ENCODE measurements at regions of chr5 and their contacts with region 1.

Region 1: GRCh38 chr5:84045964-84046363 is 325.3 kb upstream of the HAPLN1 start:
- DNase-seq: no peak
- ATAC-seq: no peak
- H3K4me3 ChIP-seq: no peak overlapping the region
- H3K27ac ChIP-seq: no peak overlapping the region
- H3K4me1 ChIP-seq: no peaks in the 10 kb centered on the region
- H3K27me3 ChIP-seq: no peaks in the 10 kb centered on the region
- CTCF ChIP-seq: no peak
- POLR2A ChIP-seq: no peak

Region 2: DNA sequence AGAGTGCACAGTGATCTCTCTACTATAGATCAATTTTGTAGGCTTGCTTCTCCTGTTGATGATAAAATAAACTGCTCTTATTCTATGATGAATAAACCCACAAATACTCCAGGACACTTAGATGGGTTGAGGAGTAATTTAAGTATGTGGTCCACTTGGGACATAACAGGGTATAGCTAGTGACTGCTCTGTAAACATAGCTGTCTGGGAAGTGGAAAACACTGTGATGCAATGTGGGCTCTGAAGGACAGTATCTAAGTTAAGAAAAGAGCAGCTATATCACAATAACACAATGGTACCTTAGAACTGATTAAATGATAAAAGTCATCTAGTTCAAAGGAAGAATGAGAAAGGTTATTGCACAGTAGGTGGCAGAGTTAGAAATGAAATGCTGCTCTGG is 31.0 kb before region 1 on chr5:
- intact Hi-C with region 1: no loop called
- DNase-seq: no peak
- ATAC-seq: no peak
- H3K4me3 ChIP-seq: no peak overlapping the region
- H3K27ac ChIP-seq: no peak overlapping the region
- H3K4me1 ChIP-seq: no peaks in the 10 kb centered on the region
- H3K27me3 ChIP-seq: no peaks in the 10 kb centered on the region
- CTCF ChIP-seq: no peak
- POLR2A ChIP-seq: no peak

Region 3: GRCh38 chr5:84181093-84181492 is 135.1 kb after region 1 on chr5:
- intact Hi-C with region 1: no loop called
- DNase-seq: peak in 1 of 5 donors; percentile 24
- ATAC-seq: peak in 1 of 4 donors; percentile 56
- H3K4me3 ChIP-seq: no peak overlapping the region
- H3K27ac ChIP-seq: no peak overlapping the region
- H3K4me1 ChIP-seq: no peaks in the 10 kb centered on the region
- H3K27me3 ChIP-seq: no peaks in the 10 kb centered on the region
- CTCF ChIP-seq: no peak
- POLR2A ChIP-seq: no peak

Region 4: GRCh38 chr5:84255315-84255714 is 209.4 kb after region 1 on chr5:
- intact Hi-C with region 1: no loop called
- DNase-seq: no peak
- ATAC-seq: no peak
- H3K4me3 ChIP-seq: no peak overlapping the region
- H3K27ac ChIP-seq: no peak overlapping the region
- H3K4me1 ChIP-seq: no peaks in the 10 kb centered on the region
- H3K27me3 ChIP-seq: no peaks in the 10 kb centered on the region
- CTCF ChIP-seq: peak in 3 of 12 donors; percentile 12 to 24 (median 18)
- POLR2A ChIP-seq: no peak

Region 5: DNA sequence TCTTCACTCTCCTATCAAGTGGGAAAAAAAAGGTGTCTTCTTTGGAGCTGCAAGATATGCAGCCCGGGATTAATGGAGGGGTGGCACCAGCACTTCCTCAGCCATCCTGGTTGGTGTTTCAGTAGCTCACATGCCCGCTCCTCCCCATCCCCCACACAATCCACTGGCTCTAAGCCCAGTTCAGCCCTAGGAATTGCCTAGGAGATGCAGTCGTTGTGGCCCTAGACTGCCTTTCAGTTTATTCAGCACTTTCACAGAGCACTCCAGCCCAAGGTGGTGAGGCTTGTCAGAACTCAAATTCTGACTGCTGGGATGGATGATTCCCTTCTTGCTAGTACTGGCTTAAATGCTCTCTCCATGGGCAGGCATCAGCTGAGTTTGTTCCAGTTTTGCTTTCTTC is 373.8 kb after region 1 on chr5:
- intact Hi-C with region 1: loop called in 1 of 10 experiments (anchors 5 kb)
- DNase-seq: no peak
- ATAC-seq: no peak
- H3K4me3 ChIP-seq: no peak overlapping the region
- H3K27ac ChIP-seq: no peak overlapping the region
- H3K4me1 ChIP-seq: no peaks in the 10 kb centered on the region
- H3K27me3 ChIP-seq: no peaks in the 10 kb centered on the region
- CTCF ChIP-seq: no peak
- POLR2A ChIP-seq: no peak

Measured in heart left ventricle (tissue), 16 donors.